Cardiac septum (tissue), 1 donor: ENCODE measurements at regions of chr10 and their contacts with region 1.

Region 1: GRCh38 chr10:93376372-93377293 is 105.5 kb downstream of the MYOF start:
- DNase-seq: no peak

Region 2: GRCh38 chr10:93288654-93289634 is 87.7 kb before region 1 on chr10:
- intact Hi-C with region 1: no loop called
- DNase-seq: no peak

Region 3: GRCh38 chr10:93352638-93353383 is 23.8 kb before region 1 on chr10:
- intact Hi-C with region 1: no loop called
- DNase-seq: no peak

Region 4: GRCh38 chr10:93406364-93407145 is 29.9 kb after region 1 on chr10:
- intact Hi-C with region 1: no loop called
- DNase-seq: no peak

Region 5: GRCh38 chr10:93420091-93420490 is 43.5 kb after region 1 on chr10:
- intact Hi-C with region 1: loop called (anchors 5 kb)
- DNase-seq: no peak

Region 6: DNA sequence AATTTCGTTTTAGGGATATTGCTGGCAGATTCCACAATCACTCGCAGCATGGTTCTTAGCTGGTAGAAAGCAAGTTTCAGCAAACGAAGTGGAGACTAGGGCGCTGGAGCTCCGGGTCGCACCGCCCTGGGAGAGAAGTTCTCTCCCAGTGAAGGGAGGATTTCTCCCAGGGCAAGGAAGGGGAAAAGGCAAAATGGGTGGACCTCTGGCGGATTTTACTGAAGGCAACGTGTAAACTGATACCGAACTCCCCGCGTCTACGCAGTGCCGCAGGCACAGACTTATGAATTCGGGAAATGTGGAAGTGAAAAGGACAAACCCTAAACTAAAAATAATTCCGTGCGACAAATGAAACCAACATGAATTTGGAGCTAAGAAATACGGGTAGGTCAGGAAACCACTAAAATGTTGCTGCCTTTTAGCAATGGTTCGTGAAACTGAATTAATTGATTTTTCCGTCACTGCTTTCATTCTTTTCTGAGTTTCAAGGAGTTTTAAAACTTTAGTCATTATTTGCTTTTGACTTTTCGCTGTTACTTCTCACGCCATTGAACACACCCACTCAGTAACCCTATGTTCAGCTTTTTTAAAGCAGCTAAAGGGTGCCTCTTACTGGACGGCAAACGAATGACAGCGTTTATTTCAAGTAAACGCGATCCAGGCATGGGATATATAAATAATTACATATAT is 105.7 kb after region 1 on chr10 and contains the start of gene MYOF:
- intact Hi-C with region 1: loop called (anchors 1 kb)
- DNase-seq: no peak
- total RNA-seq, gene MYOF: 82.5 TPM